ENCODE measurements at regions of chr12 and their contacts with region 1.

Region 1: GRCh38 chr12:98397316-98398105 is 117.9 kb upstream of the TMPO start:
- DNase-seq: peak; percentile 74
- CTCF ChIP-seq: peak; percentile 95

Region 2: GRCh38 chr12:97167598-97167997 is 1229.9 kb before region 1 on chr12:
- in situ Hi-C with region 1: loop called (anchors 25 kb)
- DNase-seq: no peak
- CTCF ChIP-seq: no peak

Region 3: DNA sequence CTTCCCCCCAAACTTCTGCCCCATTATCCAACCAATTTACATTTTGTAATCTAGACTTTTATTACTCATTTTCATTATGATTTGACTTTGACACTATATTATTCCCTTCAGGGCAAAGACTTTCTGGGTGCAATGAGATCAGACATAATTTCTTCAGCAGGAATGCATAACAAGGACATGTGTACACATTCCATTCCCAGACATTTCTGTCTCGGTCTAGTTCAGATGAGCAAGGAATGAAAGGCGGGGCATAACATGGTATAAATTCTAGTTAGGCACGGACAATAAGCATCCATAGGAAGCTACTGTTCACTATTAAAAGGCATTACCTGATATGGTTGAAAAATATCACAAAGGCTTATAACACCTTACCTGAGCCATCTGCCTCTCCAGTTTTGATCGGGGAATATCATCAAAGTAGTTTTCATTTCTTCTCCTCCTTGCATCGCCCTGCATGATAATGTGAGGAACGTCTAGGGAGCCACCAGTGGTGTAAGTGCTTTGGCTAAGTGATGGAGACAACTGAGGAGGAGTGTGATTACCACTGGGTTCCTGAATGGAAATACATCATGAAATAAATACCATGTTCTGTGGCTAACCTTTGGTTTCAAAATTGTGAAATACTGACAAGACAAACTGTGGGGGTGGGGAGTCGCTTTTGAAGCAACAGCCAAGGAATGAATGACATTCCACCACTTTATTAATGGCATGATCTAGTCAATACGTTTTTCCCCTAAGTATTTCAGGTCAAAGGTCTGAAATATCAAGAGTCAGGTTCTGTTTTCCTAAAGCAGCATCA is 431.5 kb after region 1 on chr12:
- in situ Hi-C with region 1: no loop called
- DNase-seq: no peak
- CTCF ChIP-seq: no peak